ENCODE measurements at regions of chr5 and their contacts with region 1.

Region 1: DNA sequence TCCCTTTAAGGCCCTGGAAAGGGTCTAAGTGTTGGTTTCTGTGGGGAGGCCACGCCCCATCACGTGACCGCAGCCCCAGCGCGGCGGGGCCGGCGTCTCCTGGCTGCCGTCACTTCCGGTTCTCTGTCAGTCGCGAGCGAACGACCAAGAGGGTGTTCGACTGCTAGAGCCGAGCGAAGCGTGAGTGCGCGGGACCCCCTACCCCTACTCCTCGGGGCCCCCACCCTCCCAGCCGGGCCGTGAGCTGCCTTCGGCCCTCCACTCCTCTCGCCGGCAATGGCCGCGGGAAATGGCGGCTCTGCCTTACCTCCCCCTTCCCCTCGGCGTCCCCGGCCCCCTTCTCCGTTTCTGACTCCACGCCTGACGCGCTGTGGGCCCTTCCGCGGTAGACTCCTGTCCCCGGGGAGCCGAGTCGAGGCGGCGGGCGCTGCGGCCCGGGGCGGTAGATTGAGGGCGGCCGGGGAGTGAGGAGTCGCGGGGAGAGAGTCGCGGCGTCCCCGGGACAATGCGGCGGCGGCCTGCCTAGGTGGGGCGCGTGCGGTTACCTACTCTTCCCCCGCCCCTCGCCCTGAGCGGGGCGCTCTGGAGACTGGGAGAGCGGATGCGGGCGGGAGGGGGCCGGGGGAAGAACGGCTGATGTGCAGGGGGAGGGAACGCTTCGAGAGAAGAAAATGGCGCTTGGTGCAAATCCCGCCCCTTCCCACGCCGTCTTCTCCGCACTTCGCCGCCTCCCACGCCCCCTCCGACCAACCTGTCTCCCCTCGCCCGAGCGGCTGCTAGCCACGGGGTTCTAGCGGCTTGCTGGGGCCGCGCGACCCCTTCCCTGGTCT is at the start of gene SUB1:
- DNase-seq: peak; percentile 92 to 94
- ATAC-seq: peak; percentile 93 to 94
- H3K4me3 ChIP-seq: peak within 1 kb of the TSS; percentile 85
- H3K27ac ChIP-seq: peak within 1 kb of the TSS; percentile 92 to 96
- H3K4me1 ChIP-seq: peaks cover 24% of the 10 kb centered on the region
- CTCF ChIP-seq: peak; percentile 13; the same call in 1 of the 3 replicates
- EP300 ChIP-seq: no peak
- POLR2A ChIP-seq: peak; percentile 84
- RAD21 ChIP-seq: 0 out of 5 replicates have a peak, but pooled peaks of 1 of the 2 experiments have one; percentile 10
- polyA plus RNA-seq, gene SUB1: 179 and 450 TPM in 2 replicates

Region 2: DNA sequence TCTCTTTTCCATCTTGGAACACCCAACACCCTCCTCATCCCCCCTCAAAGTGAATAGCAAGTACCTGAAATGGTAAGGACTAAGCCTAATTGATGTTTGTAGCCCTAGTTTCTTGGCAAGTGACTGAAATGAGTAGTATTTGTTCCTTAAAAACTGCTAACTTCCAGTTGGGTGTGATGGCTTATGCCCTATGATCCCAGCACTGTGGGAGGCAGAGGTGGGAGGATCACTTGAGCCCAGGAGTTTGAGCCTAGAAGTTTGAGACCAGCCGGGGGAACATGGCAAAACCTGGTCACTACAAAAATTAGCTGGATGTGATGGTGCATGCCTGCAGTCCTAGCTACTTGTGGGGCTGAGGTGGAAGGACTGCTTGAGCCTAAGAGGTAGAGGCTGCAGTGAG is 185.3 kb before region 1 on chr5:
- CTCF ChIA-PET with region 1: no interaction called
- POLR2A ChIA-PET with region 1: no interaction called
- DNase-seq: no peak
- ATAC-seq: no peak
- H3K4me3 ChIP-seq: no peak overlapping the region
- H3K27ac ChIP-seq: no peak overlapping the region
- H3K4me1 ChIP-seq: no peaks in the 10 kb centered on the region
- CTCF ChIP-seq: no peak
- EP300 ChIP-seq: no peak
- POLR2A ChIP-seq: no peak
- RAD21 ChIP-seq: no peak

Region 3: DNA sequence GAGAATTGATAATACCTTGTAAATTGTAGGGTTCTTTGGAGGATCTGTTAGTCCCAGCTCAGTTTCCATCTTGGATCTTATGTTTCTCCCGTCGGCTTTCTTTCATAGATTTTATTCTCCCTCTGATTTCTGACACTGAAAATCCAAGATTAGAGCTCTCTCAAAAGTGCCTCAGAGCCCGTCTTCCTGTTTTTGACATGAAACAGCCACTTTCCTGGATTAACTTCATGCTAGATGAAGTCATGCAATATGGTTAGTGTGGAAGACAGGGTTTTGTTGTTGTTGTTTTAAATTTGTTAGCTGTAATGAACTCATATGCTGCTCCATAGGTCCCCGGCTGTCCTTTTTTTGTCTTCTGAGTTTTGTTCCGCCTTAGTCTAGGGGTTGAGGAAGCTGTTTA is 89.6 kb before region 1 on chr5:
- CTCF ChIA-PET with region 1: interaction called, 135 read pairs
- POLR2A ChIA-PET with region 1: interaction called, 8 read pairs
- DNase-seq: no peak
- ATAC-seq: no peak
- H3K4me3 ChIP-seq: no peak overlapping the region
- H3K27ac ChIP-seq: no peak overlapping the region
- H3K4me1 ChIP-seq: 0 out of 3 replicates have a peak, but pooled peaks cover 4% of the 10 kb centered on the region
- CTCF ChIP-seq: no peak
- EP300 ChIP-seq: no peak
- POLR2A ChIP-seq: no peak
- RAD21 ChIP-seq: no peak

Region 4: DNA sequence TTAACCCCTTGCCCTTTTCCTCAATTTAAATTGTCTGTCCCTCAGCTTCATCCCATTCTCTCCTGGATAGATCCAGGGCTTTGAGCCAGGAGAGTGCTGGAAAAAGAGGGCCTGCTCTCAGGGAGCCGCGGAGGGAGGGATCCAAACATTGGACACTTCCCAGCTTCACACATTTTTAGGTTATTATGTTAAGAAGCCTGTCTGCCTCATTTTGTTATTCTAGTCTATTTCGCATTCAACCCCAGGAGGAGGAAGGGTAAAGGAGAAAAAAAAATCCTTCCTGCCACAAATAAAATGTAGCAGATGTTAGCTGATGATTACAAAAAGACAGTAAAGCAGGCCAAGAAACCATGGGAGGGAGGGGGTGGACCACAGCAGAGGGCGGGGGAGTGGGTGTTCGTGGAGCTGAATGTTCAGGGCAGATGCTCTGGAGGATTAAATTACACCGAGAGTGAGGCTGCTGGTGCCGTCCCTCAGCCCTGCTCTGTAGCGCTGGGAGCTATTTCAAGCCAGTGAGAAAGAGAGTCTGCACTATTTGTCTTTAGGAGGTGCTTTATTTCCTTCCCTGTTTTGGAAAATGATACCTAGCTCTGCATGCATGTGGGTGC is 80.6 kb before region 1 on chr5:
- CTCF ChIA-PET with region 1: interaction called, 22 read pairs
- POLR2A ChIA-PET with region 1: no interaction called
- DNase-seq: no peak
- ATAC-seq: no peak
- H3K4me3 ChIP-seq: no peak overlapping the region
- H3K27ac ChIP-seq: no peak overlapping the region
- H3K4me1 ChIP-seq: no peaks in the 10 kb centered on the region
- CTCF ChIP-seq: no peak
- EP300 ChIP-seq: no peak
- POLR2A ChIP-seq: no peak
- RAD21 ChIP-seq: no peak

Region 5: GRCh38 chr5:32523625-32524024 is 62.0 kb before region 1 on chr5:
- CTCF ChIA-PET with region 1: interaction called, 11 read pairs
- POLR2A ChIA-PET with region 1: no interaction called
- DNase-seq: peak in 1 of 2 experiments; percentile 12
- ATAC-seq: peak; percentile 87 to 89
- H3K4me3 ChIP-seq: no peak overlapping the region
- H3K27ac ChIP-seq: no peak overlapping the region
- H3K4me1 ChIP-seq: no peaks in the 10 kb centered on the region
- CTCF ChIP-seq: no peak
- EP300 ChIP-seq: no peak
- POLR2A ChIP-seq: no peak
- RAD21 ChIP-seq: peak; percentile 20; a peak in 2 of 5 replicates

Region 6: DNA sequence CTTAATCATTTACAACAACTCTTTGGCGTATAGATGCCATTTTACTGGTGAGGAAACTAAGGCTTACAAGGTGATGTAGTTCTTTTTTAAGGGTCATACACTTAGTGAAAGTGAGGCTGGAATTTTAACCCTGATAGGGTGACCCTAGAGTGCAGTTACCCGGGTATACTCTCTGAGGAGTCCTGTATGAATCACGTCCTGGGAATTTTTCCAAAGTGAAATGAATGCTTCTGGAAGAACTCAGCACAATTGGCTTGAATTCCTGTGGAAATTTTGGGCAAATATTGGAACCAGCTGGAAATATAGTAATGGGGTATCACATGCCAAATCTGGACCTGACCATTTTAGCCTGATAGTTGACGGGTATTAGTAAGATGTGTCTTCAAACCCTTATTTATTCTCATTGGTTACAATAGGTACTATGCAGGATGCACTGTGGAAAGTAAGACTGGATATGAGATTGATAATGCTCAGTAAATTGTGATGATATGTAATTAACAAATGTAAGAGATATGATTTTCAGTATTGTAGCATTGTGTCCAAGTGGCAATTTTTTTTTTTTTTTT is 14.5 kb after region 1 on chr5:
- CTCF ChIA-PET with region 1: interaction called, 10 read pairs
- POLR2A ChIA-PET with region 1: interaction called, 3 read pairs
- DNase-seq: no peak
- ATAC-seq: peak; percentile 57 to 62; a peak in 4 of 6 replicates
- H3K4me3 ChIP-seq: no peak overlapping the region
- H3K27ac ChIP-seq: no peak overlapping the region
- H3K4me1 ChIP-seq: peaks cover 21% of the 10 kb centered on the region
- CTCF ChIP-seq: no peak
- EP300 ChIP-seq: no peak
- POLR2A ChIP-seq: no peak
- RAD21 ChIP-seq: no peak

Region 7: GRCh38 chr5:32613050-32613672 is 27.5 kb after region 1 on chr5:
- CTCF ChIA-PET with region 1: interaction called, 13 read pairs
- POLR2A ChIA-PET with region 1: no interaction called
- DNase-seq: peak; percentile 76 to 77
- ATAC-seq: peak; percentile 72 to 87; a peak in 5 of 6 replicates
- H3K4me3 ChIP-seq: no peak overlapping the region
- H3K27ac ChIP-seq: no peak overlapping the region
- H3K4me1 ChIP-seq: no peaks in the 10 kb centered on the region
- CTCF ChIP-seq: peak; percentile 92
- EP300 ChIP-seq: no peak
- POLR2A ChIP-seq: no peak
- RAD21 ChIP-seq: peak; percentile 92 to 93

Region 8: DNA sequence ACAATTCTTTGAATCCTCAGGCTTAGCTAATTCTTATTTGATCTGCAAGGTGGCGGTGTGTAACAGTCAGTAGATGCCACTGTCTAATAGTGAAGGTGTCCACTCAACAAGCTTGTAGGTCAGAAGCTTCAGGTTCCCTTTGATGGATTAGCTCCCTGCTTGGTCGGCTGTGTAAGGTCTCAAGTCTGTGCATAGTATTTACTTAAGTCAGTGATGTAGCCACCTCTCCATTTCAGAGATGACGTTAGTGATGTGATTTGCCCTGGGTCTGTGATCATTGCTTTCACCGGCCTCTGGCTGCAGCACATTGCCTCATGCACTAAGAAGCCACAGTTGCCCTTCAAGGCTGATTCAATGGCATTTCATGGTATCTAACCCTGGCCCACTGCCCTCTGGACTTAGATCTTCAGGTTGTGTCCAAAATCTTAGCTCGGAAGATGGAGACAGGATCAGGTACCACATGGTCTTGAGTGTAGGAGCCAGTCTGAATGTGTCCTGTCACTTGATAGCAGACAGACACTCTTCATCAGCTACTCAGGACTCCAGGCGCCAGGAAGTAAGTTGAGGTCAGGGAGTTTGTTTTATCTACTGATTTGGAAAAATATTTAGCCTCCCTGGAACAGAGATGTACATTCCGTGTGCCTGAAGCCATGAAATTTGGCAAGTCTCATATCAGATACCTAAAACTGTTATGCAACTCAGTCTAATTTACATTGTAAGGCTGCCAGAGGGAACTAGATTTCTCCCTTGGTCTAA is 42.6 kb after region 1 on chr5:
- CTCF ChIA-PET with region 1: no interaction called
- POLR2A ChIA-PET with region 1: no interaction called
- DNase-seq: peak in 1 of 2 experiments; percentile 36
- ATAC-seq: peak; percentile 40 to 44; a peak in 3 of 6 replicates
- H3K4me3 ChIP-seq: no peak overlapping the region
- H3K27ac ChIP-seq: no peak overlapping the region
- H3K4me1 ChIP-seq: 0 out of 3 replicates have a peak, but pooled peaks cover 2% of the 10 kb centered on the region
- CTCF ChIP-seq: 0 out of 3 replicates have a peak, but pooled peaks have one; percentile 13
- EP300 ChIP-seq: no peak
- POLR2A ChIP-seq: no peak
- RAD21 ChIP-seq: peak; percentile 31 to 46; a peak in 3 of 5 replicates

Region 9: DNA sequence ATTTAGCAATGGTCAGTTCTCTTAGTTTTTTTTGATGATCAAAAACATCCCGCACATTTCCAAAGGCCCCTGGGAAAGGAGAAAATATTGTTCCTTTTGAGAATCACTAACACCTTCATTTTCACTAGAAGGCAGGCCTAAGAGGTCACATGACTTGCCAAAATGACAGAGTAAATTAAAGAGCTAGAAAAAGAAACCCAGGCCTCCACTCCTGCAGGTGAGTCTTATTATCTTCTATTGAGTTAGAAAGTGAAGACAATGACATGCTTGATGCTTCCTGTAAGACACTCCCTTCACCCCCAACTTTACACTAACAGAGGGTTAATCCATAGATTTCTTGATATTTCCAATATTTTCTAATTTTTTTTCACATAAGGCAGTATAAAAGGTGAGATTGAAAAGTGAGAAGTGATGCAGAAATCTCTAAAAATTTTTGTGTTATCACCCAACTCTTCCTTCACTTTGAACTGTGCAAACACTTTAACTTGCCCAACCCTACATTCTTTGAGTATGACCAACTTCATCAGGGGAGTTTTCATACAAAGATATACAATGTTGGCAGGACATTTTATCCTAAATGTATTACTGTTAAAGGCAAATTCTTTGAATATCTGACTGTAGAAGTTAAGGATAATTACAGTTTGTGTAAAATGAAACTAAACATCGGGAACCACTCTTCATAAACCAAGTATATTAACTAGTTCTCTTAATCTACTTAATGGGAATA is 56.8 kb after region 1 on chr5:
- CTCF ChIA-PET with region 1: no interaction called
- POLR2A ChIA-PET with region 1: no interaction called
- DNase-seq: peak; percentile 15 to 55
- ATAC-seq: peak; percentile 65 to 82
- H3K4me3 ChIP-seq: peak overlapping the region; percentile 4; the same call in 1 of the 3 replicates
- H3K27ac ChIP-seq: peak overlapping the region; percentile 62 to 74
- H3K4me1 ChIP-seq: peaks cover 29% of the 10 kb centered on the region
- CTCF ChIP-seq: no peak
- EP300 ChIP-seq: 0 out of 5 replicates have a peak, but pooled peaks of 1 of the 2 experiments have one; percentile 11
- POLR2A ChIP-seq: no peak
- RAD21 ChIP-seq: no peak

Region 10: GRCh38 chr5:32767948-32768427 is 182.3 kb after region 1 on chr5:
- CTCF ChIA-PET with region 1: no interaction called
- POLR2A ChIA-PET with region 1: no interaction called
- DNase-seq: peak; percentile 96 to 99
- ATAC-seq: peak; percentile 98 to 99
- H3K4me3 ChIP-seq: no peak overlapping the region; the same call in 2 of the 3 replicates
- H3K27ac ChIP-seq: peak overlapping the region; percentile 95 to 98
- H3K4me1 ChIP-seq: peaks cover 61% of the 10 kb centered on the region
- CTCF ChIP-seq: no peak
- EP300 ChIP-seq: peak; percentile 95 to 96; a peak in 4 of 5 replicates
- POLR2A ChIP-seq: no peak
- RAD21 ChIP-seq: peak; percentile 13 to 62; a peak in 3 of 5 replicates